ENCODE measurements at regions of chr10 and their contacts with region 1.

Region 1: GRCh38 chr10:86936661-86937501 is 20.5 kb downstream of the MMRN2 start:
- DNase-seq: no peak
- H3K4me3 ChIP-seq: no peak overlapping the region
- H3K27ac ChIP-seq: no peak overlapping the region
- H3K4me1 ChIP-seq: peaks cover 0 to 4% (median 2%) of the 10 kb centered on the region in 4 experiments
- H3K27me3 ChIP-seq: peaks cover 0 to 1% (median 0%) of the 10 kb centered on the region in 5 experiments

Region 2: DNA sequence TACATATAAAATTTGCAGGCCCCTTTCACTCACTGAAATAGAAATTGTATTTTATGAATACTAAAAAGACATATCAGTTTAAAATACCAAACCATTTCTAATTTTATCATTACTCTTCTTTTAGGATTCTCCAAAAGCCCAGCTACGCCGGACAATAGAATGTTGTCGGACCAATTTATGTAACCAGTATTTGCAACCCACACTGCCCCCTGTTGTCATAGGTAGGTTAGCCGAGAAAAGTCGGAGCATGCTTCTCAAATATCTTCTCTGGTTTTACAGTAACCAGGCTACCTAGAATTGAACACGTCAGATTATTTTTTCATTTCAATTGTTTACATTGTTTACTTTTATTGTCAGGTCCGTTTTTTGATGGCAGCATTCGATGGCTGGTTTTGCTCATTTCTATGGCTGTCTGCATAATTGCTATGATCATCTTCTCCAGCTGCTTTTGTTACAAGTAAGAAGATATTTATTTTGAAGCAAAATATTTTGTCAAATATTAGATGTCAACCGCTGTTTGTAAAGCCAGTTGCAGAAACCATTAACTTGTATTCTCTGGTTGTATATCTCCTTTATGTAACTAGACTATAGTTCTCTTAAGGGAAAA is 37.1 kb before region 1 on chr10:
- CTCF ChIA-PET with region 1: no interaction called
- POLR2A ChIA-PET with region 1: no interaction called
- DNase-seq: peak; percentile 66 to 76 (median 68)
- H3K4me3 ChIP-seq: no peak overlapping the region
- H3K27ac ChIP-seq: no peak overlapping the region
- H3K4me1 ChIP-seq: no peaks in the 10 kb centered on the region
- H3K27me3 ChIP-seq: peaks cover 0 to 26% (median 3%) of the 10 kb centered on the region in 5 experiments

Region 3: DNA sequence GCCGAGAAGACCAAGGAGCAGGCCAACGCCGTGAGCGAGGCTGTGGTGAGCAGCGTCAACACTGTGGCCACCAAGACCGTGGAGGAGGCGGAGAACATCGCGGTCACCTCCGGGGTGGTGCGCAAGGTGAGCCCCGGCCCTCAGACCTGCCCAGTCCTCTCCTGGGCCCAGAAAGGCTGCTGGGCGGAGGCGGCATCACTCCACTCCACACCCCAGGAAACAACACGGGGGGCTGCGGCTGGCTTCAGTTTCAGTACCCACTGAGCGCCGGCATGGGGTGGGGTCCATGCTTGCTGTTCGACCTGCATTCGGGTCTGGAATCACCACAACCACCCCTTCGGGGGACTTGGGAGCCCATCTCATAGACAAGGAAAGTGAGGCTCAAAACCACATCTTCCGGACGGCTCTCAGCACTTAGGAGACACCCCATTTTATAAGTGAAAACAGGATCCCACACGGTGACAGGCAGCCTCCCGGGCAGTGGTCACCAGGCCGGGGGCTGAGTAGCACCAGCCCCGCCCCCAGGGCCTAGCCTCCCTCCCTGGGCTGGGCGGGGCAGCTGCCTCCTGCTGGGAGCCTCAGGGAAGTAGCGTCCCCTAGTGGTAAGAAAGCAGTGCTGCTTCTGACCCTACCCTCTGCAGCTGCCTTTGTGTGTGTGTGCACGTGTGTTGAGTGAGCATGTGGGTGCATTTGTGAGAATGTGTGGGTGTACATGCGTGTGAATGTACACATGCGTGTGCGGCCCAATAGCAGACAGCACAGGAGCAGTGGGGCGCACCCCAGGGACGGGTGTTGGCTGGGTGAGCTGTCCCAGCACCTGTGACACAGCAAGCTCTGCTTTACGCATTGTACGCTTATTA is 23.4 kb after region 1 on chr10:
- CTCF ChIA-PET with region 1: interaction called, 13 read pairs
- POLR2A ChIA-PET with region 1: no interaction called
- DNase-seq: peak; percentile 47 to 59 (median 58)
- H3K4me3 ChIP-seq: no peak overlapping the region
- H3K27ac ChIP-seq: no peak overlapping the region
- H3K4me1 ChIP-seq: peaks cover 0 to 31% (median 17%) of the 10 kb centered on the region in 4 experiments
- H3K27me3 ChIP-seq: peaks cover 0 to 2% (median 0%) of the 10 kb centered on the region in 5 experiments

Region 4: DNA sequence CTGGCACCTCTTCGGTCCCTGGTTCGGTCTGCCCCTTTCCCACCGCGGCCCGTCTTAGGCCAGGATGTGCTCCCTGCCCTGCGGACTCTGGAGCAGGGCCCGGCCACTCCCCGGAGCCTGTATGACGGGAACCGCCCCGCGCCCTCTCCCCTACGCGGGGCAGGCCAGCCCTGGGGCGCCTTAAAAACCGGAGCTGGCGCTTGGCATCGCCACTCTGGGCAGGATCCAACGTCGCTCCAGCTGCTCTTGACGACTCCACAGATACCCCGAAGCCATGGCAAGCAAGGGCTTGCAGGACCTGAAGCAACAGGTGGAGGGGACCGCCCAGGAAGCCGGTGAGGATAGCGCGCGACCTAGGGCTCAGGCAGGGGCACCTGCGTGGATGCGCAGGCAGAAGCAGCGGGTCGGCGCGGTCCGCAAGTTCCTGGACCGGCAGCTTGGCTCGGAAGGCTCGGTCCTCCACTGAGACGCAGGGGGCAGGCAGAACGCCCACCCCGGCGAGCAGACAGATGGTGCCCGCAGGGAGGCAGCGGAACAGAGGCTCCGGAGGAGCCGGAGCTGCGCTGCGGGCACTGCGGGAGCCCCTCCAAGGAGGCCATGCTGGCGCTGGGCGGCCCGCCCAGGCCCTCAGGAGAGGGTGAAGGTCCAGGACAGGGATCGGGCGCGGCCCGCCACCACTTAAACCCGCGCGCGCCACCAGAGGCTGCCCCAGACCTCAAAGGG is 31.6 kb after region 1 on chr10 and contains the start of gene ADIRF:
- CTCF ChIA-PET with region 1: interaction called, 11 read pairs
- POLR2A ChIA-PET with region 1: no interaction called
- DNase-seq: peak in 2 of 3 donors; percentile 23 to 47
- H3K4me3 ChIP-seq: peak within 1 kb of the TSS in 4 of 7 experiments; percentile 35 to 63 (median 53)
- H3K27ac ChIP-seq: no peak within 1 kb of the TSS
- H3K4me1 ChIP-seq: peaks cover 0 to 50% (median 36%) of the 10 kb centered on the region in 4 experiments
- H3K27me3 ChIP-seq: peaks cover 0 to 45% (median 25%) of the 10 kb centered on the region in 5 experiments